IMR-90 (cell line): ENCODE measurements at regions of chr13 and their contacts with region 1.

Region 1: DNA sequence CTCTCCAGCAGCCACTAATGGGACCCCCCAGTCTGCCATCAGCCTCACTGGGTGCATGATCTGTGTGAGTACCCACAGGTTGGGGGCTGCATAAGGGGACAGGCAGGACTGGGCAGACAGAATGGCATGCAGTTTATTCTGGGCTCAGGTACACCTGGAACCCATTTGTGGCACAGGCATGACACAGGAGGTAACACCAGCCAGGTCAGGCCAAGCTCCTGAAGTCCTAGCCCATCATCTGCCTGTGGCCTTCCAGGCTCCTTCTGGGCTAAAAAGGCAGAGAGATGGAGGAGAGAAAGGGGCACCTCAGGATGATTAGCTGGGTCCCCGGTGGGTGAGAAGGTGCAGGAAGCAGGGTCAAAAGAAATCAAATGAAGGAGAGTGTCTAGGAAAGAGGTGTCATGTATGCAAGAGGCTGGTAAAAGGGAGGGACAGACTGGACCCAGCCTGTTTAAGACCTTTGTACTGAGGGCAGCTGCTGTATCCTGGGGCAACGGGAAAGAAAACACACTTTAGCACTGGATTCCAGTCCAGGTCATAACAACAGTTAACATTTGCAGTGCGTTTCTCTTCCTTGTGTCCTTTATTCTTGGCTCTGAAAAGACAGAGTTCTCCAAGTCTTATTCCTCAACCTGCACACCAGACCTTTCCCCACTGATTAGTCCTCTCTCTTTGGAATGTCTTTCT is 20.2 kb upstream of the DGKH start:
- DNase-seq: no peak
- ATAC-seq: no peak
- H3K4me3 ChIP-seq: no peak overlapping the region
- H3K27ac ChIP-seq: no peak overlapping the region
- H3K4me1 ChIP-seq: no peaks in the 10 kb centered on the region
- H3K27me3 ChIP-seq: no peaks in the 10 kb centered on the region
- CTCF ChIP-seq: no peak
- POLR2A ChIP-seq: no peak
- RAD21 ChIP-seq: no peak

Region 2: DNA sequence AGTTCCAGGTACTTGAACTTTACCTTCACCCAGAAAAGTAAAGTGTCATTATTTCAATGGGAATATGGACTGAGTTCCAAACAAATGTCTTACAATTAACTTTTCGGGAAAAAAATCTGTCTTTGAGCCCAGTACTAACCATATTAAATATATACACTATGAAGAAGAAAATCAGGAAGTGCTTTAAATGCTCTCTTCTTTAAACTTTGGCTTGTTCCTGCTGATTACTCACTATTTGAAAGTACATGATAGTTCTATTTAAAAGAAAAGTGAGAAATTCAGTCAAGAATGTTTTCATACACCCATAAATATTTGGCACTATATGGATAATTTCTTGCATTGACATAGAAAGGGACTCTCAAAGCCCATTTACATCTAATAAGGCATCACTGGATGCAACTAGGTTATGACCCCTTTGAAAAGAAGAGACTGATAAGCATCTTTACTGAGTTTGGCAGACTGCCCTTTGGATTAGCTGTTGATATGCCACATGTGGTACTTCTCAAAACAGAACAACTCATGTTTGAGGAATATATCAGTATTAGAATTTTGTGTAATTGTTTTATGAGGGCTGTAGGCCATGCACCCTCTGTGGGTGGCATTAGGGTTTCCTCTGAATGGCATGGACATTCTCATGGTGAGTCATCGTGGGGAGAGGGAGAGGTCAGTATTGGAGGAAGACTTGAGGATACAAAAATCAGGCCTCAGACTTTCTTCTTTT is 42.3 kb before region 1 on chr13:
- CTCF ChIA-PET with region 1: no interaction called
- POLR2A ChIA-PET with region 1: interaction called, 20 read pairs
- dilution Hi-C with region 1: no loop called
- in situ Hi-C with region 1: no loop called
- intact Hi-C with region 1: no loop called
- DNase-seq: peak; percentile 35
- ATAC-seq: peak; percentile 57
- H3K4me3 ChIP-seq: no peak overlapping the region
- H3K27ac ChIP-seq: no peak overlapping the region
- H3K4me1 ChIP-seq: peaks cover 3% of the 10 kb centered on the region; the same call in 1 of the 2 replicates
- H3K27me3 ChIP-seq: no peaks in the 10 kb centered on the region
- CTCF ChIP-seq: no peak
- POLR2A ChIP-seq: no peak
- RAD21 ChIP-seq: no peak

Region 3: DNA sequence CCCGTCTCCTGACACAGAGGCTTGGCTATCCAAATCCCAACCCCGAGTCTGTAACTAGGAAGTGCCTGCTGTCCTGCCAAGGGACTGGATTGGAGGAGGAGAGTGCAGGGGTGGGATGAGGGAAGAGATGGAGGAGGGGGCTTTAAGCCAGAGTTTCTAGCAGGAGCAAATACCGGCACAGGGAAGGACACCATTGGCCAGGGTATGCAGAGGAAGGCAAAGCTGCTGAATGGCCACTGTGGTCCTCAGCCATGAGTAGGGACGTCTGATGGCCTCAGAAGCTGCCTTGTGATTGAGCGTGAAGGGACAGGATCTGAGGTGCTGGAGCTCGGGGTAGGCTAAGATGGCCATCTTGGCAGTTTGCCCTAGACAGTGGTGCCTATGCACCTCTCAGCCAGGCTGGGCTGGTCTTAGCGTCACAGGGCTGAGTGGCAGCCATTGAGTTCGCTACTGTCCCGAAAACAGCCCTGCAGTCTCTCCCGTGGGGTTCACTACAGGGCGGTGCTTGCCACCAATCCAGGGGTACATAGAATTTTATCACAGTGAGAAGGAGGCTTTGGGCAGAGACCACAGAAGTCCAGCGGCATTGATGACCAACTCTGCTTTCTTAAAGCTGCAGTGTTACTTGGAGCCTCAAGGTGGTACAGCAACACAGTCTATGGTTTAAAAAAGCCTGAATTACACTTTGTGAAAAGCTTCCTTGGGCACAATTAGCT is 305.5 kb after region 1 on chr13:
- CTCF ChIA-PET with region 1: no interaction called
- POLR2A ChIA-PET with region 1: no interaction called
- dilution Hi-C with region 1: no loop called
- in situ Hi-C with region 1: no loop called
- intact Hi-C with region 1: no loop called
- DNase-seq: peak; percentile 22
- ATAC-seq: peak; percentile 75
- H3K4me3 ChIP-seq: no peak overlapping the region
- H3K27ac ChIP-seq: no peak overlapping the region
- H3K4me1 ChIP-seq: no peaks in the 10 kb centered on the region
- H3K27me3 ChIP-seq: peaks cover 10% of the 10 kb centered on the region
- CTCF ChIP-seq: peak; percentile 31; the same call in 1 of the 2 replicates
- POLR2A ChIP-seq: no peak
- RAD21 ChIP-seq: peak; percentile 51